B cell (primary cell): ENCODE measurements at regions of chr3 and their contacts with region 1.

Region 1: GRCh38 chr3:133573054-133573628 is 345 bp upstream of the CDV3 start:
- DNase-seq: peak; percentile 100
- ATAC-seq: peak; percentile 81
- H3K4me3 ChIP-seq: peak overlapping the region; percentile 46 to 86 (median 75)
- H3K4me3 Mint-ChIP-seq: peak overlapping the region; percentile 89
- H3K27ac ChIP-seq: peak overlapping the region; percentile 93 to 94
- H3K27ac Mint-ChIP-seq: peak overlapping the region; percentile 97
- H3K4me1 ChIP-seq: peaks cover 43 to 59% of the 10 kb centered on the region in 2 donors
- H3K4me1 Mint-ChIP-seq: peaks cover 76% of the 10 kb centered on the region
- H3K27me3 ChIP-seq: no peaks in the 10 kb centered on the region
- H3K27me3 Mint-ChIP-seq: no peaks in the 10 kb centered on the region
- CTCF ChIP-seq: no peak

Region 2: GRCh38 chr3:133448478-133449122 is 124.5 kb before region 1 on chr3:
- CTCF ChIA-PET with region 1: interaction called, 29 read pairs
- POLR2A ChIA-PET with region 1: interaction called, 18 read pairs
- intact Hi-C with region 1: loop called (anchors 1 kb)
- DNase-seq: peak; percentile 90
- ATAC-seq: peak; percentile 88
- H3K4me3 ChIP-seq: no peak overlapping the region
- H3K4me3 Mint-ChIP-seq: peak overlapping the region; percentile 80
- H3K27ac ChIP-seq: peak overlapping the region; percentile 47 to 52
- H3K27ac Mint-ChIP-seq: peak overlapping the region; percentile 90
- H3K4me1 ChIP-seq: peaks cover 35 to 41% of the 10 kb centered on the region in 2 donors
- H3K4me1 Mint-ChIP-seq: peaks cover 49% of the 10 kb centered on the region
- H3K27me3 ChIP-seq: peaks cover 0 to 10% (median 5%) of the 10 kb centered on the region in 4 experiments
- H3K27me3 Mint-ChIP-seq: no peaks in the 10 kb centered on the region
- CTCF ChIP-seq: no peak

Region 3: GRCh38 chr3:133475245-133476010 is 97.7 kb before region 1 on chr3:
- CTCF ChIA-PET with region 1: interaction called, 4 read pairs
- POLR2A ChIA-PET with region 1: interaction called, 14 read pairs
- intact Hi-C with region 1: loop called (anchors 1 kb)
- DNase-seq: peak; percentile 81
- ATAC-seq: peak; percentile 73
- H3K4me3 ChIP-seq: peak overlapping the region in 1 of 5 experiments; percentile 25
- H3K4me3 Mint-ChIP-seq: peak overlapping the region; percentile 81
- H3K27ac ChIP-seq: peak overlapping the region; percentile 75 to 82
- H3K27ac Mint-ChIP-seq: peak overlapping the region; percentile 87
- H3K4me1 ChIP-seq: peaks cover 59 to 74% of the 10 kb centered on the region in 2 donors
- H3K4me1 Mint-ChIP-seq: peaks cover 72% of the 10 kb centered on the region
- H3K27me3 ChIP-seq: no peaks in the 10 kb centered on the region
- H3K27me3 Mint-ChIP-seq: no peaks in the 10 kb centered on the region
- CTCF ChIP-seq: no peak

Region 4: GRCh38 chr3:133506215-133506901 is 66.8 kb before region 1 on chr3:
- CTCF ChIA-PET with region 1: interaction called, 3 read pairs
- POLR2A ChIA-PET with region 1: interaction called, 5 read pairs
- intact Hi-C with region 1: loop called (anchors 5 kb)
- DNase-seq: peak; percentile 71
- ATAC-seq: peak; percentile 93
- H3K4me3 ChIP-seq: peak overlapping the region in 3 of 5 experiments; percentile 28 to 51 (median 33)
- H3K4me3 Mint-ChIP-seq: peak overlapping the region; percentile 73
- H3K27ac ChIP-seq: peak overlapping the region; percentile 14 to 55
- H3K27ac Mint-ChIP-seq: peak overlapping the region; percentile 69
- H3K4me1 ChIP-seq: peaks cover 12 to 15% of the 10 kb centered on the region in 2 donors
- H3K4me1 Mint-ChIP-seq: peaks cover 13% of the 10 kb centered on the region
- H3K27me3 ChIP-seq: no peaks in the 10 kb centered on the region
- H3K27me3 Mint-ChIP-seq: no peaks in the 10 kb centered on the region
- CTCF ChIP-seq: no peak

Region 5: GRCh38 chr3:133661454-133662277 is 88.5 kb after region 1 on chr3 and contains the start of gene TOPBP1:
- CTCF ChIA-PET with region 1: no interaction called
- POLR2A ChIA-PET with region 1: interaction called, 5 read pairs
- intact Hi-C with region 1: loop called (anchors 1 kb)
- DNase-seq: peak; percentile 88
- ATAC-seq: peak; percentile 84
- H3K4me3 ChIP-seq: peak within 1 kb of the TSS; percentile 74 to 95 (median 91)
- H3K4me3 Mint-ChIP-seq: peak within 1 kb of the TSS; percentile 98
- H3K27ac ChIP-seq: peak within 1 kb of the TSS; percentile 67 to 87
- H3K27ac Mint-ChIP-seq: peak within 1 kb of the TSS; percentile 95
- H3K4me1 ChIP-seq: peaks cover 19 to 26% of the 10 kb centered on the region in 2 donors
- H3K4me1 Mint-ChIP-seq: peaks cover 41% of the 10 kb centered on the region
- H3K27me3 ChIP-seq: no peaks in the 10 kb centered on the region
- H3K27me3 Mint-ChIP-seq: no peaks in the 10 kb centered on the region
- CTCF ChIP-seq: no peak
- total RNA-seq, gene TOPBP1: 47.7 and 53.7 TPM in 2 replicates

Region 6: DNA sequence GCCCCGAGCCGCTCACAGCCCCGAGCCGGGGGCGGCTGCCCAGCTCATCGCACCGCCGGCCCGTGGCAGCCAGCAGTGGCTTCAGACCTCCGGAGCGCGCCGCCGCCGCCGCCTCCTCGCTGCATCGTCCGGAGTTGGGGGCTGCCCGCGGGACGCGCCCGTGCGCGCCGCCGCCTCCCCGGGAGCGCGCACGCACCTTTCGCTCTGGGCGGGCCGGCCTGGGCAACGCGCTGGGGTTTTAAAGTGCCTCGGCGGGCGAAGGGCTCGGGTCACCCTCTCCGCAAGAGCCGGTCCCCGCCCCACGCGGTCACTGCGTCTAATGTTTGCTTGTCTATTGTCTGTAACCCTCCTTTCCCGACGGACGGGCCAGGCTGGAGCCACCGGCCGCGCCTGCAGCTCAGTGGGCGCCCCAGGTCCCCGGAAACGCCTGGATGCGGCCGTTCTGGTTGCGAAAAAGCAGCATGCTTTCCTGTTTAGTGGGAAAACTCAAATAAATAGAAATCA is 677.6 kb after region 1 on chr3 and contains the start of gene RYK:
- CTCF ChIA-PET with region 1: no interaction called
- POLR2A ChIA-PET with region 1: no interaction called
- intact Hi-C with region 1: loop called (anchors 10 kb)
- DNase-seq: peak; percentile 90
- ATAC-seq: peak; percentile 73
- H3K4me3 ChIP-seq: peak within 1 kb of the TSS; percentile 69 to 90 (median 74)
- H3K4me3 Mint-ChIP-seq: peak within 1 kb of the TSS; percentile 93
- H3K27ac ChIP-seq: peak within 1 kb of the TSS; percentile 71 to 82
- H3K27ac Mint-ChIP-seq: peak within 1 kb of the TSS; percentile 93
- H3K4me1 ChIP-seq: peaks cover 29 to 30% of the 10 kb centered on the region in 2 donors
- H3K4me1 Mint-ChIP-seq: peaks cover 49% of the 10 kb centered on the region
- H3K27me3 ChIP-seq: no peaks in the 10 kb centered on the region
- H3K27me3 Mint-ChIP-seq: no peaks in the 10 kb centered on the region
- CTCF ChIP-seq: no peak
- total RNA-seq, gene RYK: 63.9 and 67.7 TPM in 2 replicates